ENCODE measurements at regions of chr4 and their contacts with region 1.

Region 1: DNA sequence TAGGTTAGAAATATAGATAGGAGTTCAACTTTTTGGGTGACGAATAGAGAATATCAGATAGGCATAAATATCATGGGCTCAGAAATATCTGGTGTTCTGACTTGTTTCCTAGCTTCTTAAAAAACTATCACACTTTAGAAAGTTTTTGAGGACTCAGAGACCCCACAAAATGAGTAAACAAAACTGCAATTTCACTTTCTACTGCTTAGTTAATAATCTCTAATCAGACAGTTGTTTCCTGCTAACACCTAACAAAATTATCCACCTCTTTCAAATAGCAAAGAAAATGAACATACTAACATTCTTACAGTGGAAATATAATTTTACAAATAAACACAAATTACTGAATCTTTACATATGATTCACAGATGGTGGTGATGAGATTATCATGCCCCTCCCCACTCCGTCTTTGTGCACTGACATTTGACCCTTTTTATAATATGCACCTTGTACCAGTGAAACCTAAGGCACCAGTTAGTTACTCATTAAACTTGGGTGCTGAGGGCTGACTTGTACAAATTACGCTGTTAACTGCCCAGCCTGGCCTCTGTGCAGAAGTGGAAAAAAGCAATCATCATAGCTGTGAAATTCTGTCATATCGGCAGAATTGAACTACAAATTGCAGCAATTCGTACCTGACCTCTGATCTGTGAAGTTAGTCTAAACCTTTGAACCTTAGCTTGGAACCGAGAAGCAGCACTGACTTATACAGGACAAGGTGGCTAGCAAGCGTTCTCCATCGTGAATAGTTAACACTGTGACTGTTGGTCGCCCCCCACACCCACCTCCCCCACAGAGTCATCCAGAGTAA is 138.7 kb downstream of the CHRNA9 start:
- DNase-seq: no peak
- ATAC-seq: no peak
- H3K4me3 Mint-ChIP-seq: no peak overlapping the region
- H3K27ac Mint-ChIP-seq: peak overlapping the region; percentile 12; the same call in 1 of the 2 replicates
- H3K4me1 Mint-ChIP-seq: peaks cover 22% of the 10 kb centered on the region
- H3K27me3 Mint-ChIP-seq: no peaks in the 10 kb centered on the region
- CTCF ChIP-seq: no peak

Region 2: DNA sequence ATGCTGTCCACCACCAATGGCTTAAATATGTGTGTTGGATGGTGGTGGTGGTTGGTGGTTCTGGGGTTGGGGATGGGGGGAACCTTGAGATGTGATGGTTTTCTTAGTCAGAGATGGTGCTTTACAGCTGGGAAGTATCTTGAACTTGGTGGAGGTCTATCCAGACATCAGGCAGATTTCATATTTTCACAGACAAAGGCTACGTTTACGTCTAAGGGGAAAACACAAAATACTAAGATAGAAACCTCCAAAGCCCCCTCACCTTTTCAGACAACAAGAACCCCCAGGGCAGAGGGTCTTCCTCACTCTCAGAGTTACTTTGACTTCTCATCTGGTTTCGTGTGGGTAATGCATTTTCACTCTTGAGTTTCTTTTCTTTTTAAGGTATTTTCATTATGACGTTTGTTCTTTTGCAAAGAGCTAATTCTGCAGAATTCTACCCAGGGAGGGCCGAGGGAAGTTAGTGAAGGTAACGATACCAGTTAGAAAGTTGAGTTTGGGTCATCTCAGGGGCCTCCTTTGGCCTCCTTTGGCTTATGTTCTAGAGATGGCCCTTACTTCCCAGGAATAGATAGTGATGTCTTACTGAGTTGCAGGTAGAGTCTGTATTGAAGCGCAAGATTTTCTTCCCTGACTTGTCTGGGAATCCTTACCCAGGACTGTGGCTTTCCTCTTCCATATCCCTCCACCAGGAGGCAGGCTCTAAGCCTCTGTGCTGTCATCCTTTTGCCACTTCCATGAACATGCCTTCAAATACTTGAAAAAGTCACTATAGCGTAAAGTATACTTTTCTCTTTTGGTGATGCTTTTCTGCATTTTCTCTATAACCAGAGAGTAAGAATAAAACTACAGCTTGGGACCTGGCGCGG is 245.1 kb before region 1 on chr4:
- CTCF ChIA-PET with region 1: no interaction called
- POLR2A ChIA-PET with region 1: no interaction called
- DNase-seq: peak; percentile 52
- ATAC-seq: peak; percentile 86
- H3K4me3 Mint-ChIP-seq: no peak overlapping the region
- H3K27ac Mint-ChIP-seq: 0 out of 2 replicates have a peak overlapping the region, but pooled peaks have one; percentile 19
- H3K4me1 Mint-ChIP-seq: peaks cover 28% of the 10 kb centered on the region
- H3K27me3 Mint-ChIP-seq: no peaks in the 10 kb centered on the region
- CTCF ChIP-seq: peak; percentile 44; the same call in 1 of the 2 replicates

Region 3: GRCh38 chr4:40536032-40536431 is 62.2 kb after region 1 on chr4:
- CTCF ChIA-PET with region 1: no interaction called
- POLR2A ChIA-PET with region 1: interaction called, 10 read pairs
- DNase-seq: no peak
- ATAC-seq: no peak
- H3K4me3 Mint-ChIP-seq: no peak overlapping the region
- H3K27ac Mint-ChIP-seq: peak overlapping the region; percentile 14; the same call in 1 of the 2 replicates
- H3K4me1 Mint-ChIP-seq: no peaks in the 10 kb centered on the region
- H3K27me3 Mint-ChIP-seq: no peaks in the 10 kb centered on the region
- CTCF ChIP-seq: no peak